Natural killer cell (primary cell): ENCODE measurements at regions of chr18 and their contacts with region 1.

Region 1: DNA sequence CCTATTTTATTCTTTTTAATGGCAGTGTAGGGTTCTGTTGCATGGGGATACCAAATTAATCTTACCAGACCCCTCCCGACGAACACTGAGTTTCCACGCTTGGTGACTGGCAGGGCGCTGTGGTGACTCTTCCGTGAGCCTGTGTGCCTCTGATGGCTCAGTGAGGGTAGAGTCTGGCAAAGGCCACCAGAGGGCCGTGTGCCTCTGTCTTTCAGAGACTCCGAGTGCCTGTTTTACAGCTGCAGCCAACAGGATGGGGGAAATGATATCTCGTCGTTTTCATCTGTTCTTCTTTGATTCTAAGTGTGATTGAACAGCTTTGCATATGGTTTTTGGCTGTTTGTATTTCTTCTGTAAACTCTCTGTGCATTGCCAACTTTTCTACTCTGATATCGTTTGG is 99.8 kb downstream of the ZNF236 start:
- DNase-seq: peak; percentile 31 to 76
- ATAC-seq: peak; percentile 88 to 100 (median 99)
- H3K4me3 ChIP-seq: no peak overlapping the region
- H3K4me3 Mint-ChIP-seq: no peak overlapping the region
- H3K27ac ChIP-seq: no peak overlapping the region
- H3K27ac Mint-ChIP-seq: no peak overlapping the region
- H3K4me1 ChIP-seq: no peaks in the 10 kb centered on the region
- H3K4me1 Mint-ChIP-seq: peaks cover 8 to 15% of the 10 kb centered on the region in 2 donors
- H3K27me3 ChIP-seq: no peaks in the 10 kb centered on the region
- H3K27me3 Mint-ChIP-seq: no peaks in the 10 kb centered on the region
- CTCF ChIP-seq: peak; percentile 68

Region 2: DNA sequence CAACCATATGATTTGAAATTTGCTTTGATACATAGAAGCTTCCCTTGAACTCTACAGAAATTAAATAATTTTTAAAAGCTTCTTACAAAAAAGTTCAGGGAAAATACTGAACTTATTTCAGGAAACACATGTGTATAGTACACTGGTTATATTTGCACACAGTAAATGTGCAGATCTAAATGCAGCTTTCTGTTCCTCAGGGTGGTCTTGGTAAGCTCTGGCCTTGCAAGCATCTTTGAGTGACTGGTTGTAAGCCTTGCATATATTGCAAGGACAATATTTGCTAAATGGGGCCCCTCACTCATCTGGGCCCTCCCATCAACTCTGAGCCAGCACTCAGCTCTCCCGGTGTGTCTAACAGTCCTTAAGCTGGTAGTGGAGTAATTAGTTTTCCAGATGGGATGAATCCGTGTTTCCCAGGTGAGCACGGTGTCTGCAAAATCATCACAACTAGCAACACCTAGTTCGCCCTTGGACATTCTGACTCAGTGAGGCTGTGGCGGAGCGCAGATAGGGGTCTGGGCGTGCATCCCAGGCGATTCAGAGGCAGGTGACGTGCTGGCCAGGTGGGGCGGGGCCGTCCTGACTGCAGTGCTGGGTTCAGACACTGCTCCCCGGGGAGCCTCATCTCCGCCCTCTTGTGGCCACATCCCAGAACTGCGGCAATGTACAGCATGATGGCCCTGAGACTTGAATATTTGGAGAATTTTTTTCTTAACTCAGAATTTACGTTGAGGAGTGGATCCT is 60.9 kb after region 1 on chr18:
- intact Hi-C with region 1: loop called (anchors 1 kb)
- DNase-seq: peak; percentile 77 to 88
- ATAC-seq: peak; percentile 88 to 100 (median 98)
- H3K4me3 ChIP-seq: no peak overlapping the region
- H3K4me3 Mint-ChIP-seq: no peak overlapping the region
- H3K27ac ChIP-seq: no peak overlapping the region
- H3K27ac Mint-ChIP-seq: no peak overlapping the region
- H3K4me1 ChIP-seq: peaks cover 5% of the 10 kb centered on the region
- H3K4me1 Mint-ChIP-seq: peaks cover 5 to 8% of the 10 kb centered on the region in 2 donors
- H3K27me3 ChIP-seq: no peaks in the 10 kb centered on the region
- H3K27me3 Mint-ChIP-seq: no peaks in the 10 kb centered on the region
- CTCF ChIP-seq: peak; percentile 94